ENCODE measurements at regions of chr14 and their contacts with region 1.

Region 1: GRCh38 chr14:54175298-54175942 is 218.8 kb upstream of the BMP4 start:
- DNase-seq: peak; percentile 16
- ATAC-seq: peak; percentile 62; the same call in 2 of the 3 replicates
- H3K4me3 ChIP-seq: no peak overlapping the region
- H3K27ac ChIP-seq: no peak overlapping the region
- H3K4me1 ChIP-seq: no peaks in the 10 kb centered on the region
- H3K27me3 ChIP-seq: peaks cover 0 to 4% of the 10 kb centered on the region in 2 experiments; a peak in 1 of 4 replicates
- CTCF ChIP-seq: peak; percentile 60 to 76 (median 69)
- EP300 ChIP-seq: no peak
- POLR2A ChIP-seq: no peak
- RAD21 ChIP-seq: peak; percentile 87

Region 2: DNA sequence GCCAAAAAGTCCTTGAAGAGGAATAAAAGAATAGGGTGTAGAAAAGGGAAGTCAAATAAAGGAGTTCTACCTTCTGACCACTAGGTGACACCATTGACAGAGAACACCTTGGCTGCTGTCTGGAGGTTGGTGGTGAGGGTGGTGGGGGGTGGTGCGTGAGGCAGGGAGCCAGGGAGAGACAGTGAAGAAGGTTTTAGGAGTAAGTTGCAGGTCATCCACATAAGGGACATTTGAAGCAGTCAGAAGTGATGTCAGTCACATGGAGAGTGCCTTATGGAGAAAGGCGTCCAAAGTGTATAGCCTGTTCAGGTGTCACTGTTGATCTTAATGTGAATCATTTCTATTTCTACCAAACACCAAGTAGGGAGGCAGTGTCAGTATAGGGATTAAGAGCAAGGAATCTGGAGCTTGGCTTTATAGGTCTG is 743.0 kb before region 1 on chr14:
- CTCF ChIA-PET with region 1: interaction called, 10 read pairs
- POLR2A ChIA-PET with region 1: no interaction called
- RAD21 ChIA-PET with region 1: no interaction called
- SMC1A ChIA-PET with region 1: interaction called, 3 read pairs
- in situ Hi-C with region 1: no loop called
- intact Hi-C with region 1: loop called (anchors 1 kb)
- DNase-seq: no peak
- ATAC-seq: peak; percentile 87
- H3K4me3 ChIP-seq: no peak overlapping the region
- H3K27ac ChIP-seq: no peak overlapping the region
- H3K4me1 ChIP-seq: no peaks in the 10 kb centered on the region
- H3K27me3 ChIP-seq: no peaks in the 10 kb centered on the region
- CTCF ChIP-seq: peak; percentile 63 to 70 (median 70)
- EP300 ChIP-seq: no peak
- POLR2A ChIP-seq: no peak
- RAD21 ChIP-seq: peak; percentile 87

Region 3: GRCh38 chr14:53929871-53930715 is 245.3 kb before region 1 on chr14:
- CTCF ChIA-PET with region 1: interaction called, 3 read pairs
- POLR2A ChIA-PET with region 1: no interaction called
- RAD21 ChIA-PET with region 1: interaction called, 3 read pairs
- SMC1A ChIA-PET with region 1: interaction called, 11 read pairs
- in situ Hi-C with region 1: no loop called
- intact Hi-C with region 1: loop called (anchors 2 kb)
- DNase-seq: no peak
- ATAC-seq: peak; percentile 54; the same call in 2 of the 3 replicates
- H3K4me3 ChIP-seq: no peak overlapping the region
- H3K27ac ChIP-seq: no peak overlapping the region
- H3K4me1 ChIP-seq: no peaks in the 10 kb centered on the region
- H3K27me3 ChIP-seq: no peaks in the 10 kb centered on the region; a peak in 1 of 4 replicates
- CTCF ChIP-seq: peak; percentile 60 to 71 (median 68)
- EP300 ChIP-seq: no peak
- POLR2A ChIP-seq: no peak
- RAD21 ChIP-seq: peak; percentile 59

Region 4: DNA sequence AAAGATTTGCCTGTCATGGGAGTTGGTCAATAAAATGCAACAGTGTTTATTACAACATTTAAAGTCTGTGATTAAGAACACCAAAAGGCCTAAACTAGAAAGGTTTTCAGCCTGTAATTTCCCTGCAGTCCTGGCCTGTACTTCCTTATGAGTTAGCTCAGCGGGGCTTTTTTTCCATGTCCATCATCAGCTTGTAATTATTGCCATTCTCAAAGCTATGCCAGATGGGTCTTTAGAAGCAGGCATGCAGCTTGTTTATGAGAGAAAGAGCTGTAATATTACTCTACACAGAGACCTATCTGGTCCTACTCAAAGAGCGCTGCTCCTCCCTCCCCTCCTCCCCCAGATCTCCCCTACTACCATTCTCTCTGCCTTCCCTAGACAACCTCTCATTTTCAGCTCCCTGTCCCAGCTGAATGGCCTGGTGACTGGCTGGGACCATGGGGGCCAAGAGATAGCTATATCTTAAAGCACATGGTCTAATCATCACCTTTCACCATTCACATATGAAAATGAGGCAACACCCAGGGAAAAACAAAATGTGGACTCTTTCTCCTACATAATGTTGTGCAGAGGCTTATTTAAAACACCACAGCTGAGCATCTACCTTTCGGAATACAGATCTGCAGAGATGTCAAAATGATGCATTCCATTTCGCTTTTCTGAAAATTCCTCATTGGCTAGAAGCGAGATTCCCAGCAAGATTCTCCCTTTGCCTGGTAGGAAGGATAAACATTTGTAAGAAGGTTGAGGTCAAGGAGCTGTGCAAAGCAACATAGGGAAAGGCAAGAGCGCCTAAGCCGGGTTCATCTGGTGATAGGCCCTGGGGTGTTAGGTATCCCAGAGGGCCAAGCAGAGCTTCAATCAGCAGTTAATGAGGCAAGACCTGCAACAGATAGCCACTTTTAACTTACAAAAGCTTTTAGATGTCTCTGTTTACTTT is 11.7 kb after region 1 on chr14:
- CTCF ChIA-PET with region 1: interaction called, 10 read pairs
- POLR2A ChIA-PET with region 1: no interaction called
- RAD21 ChIA-PET with region 1: no interaction called
- SMC1A ChIA-PET with region 1: interaction called, 4 read pairs
- in situ Hi-C with region 1: no loop called
- intact Hi-C with region 1: no loop called
- DNase-seq: no peak
- ATAC-seq: no peak
- H3K4me3 ChIP-seq: no peak overlapping the region
- H3K27ac ChIP-seq: no peak overlapping the region
- H3K4me1 ChIP-seq: no peaks in the 10 kb centered on the region
- H3K27me3 ChIP-seq: no peaks in the 10 kb centered on the region
- CTCF ChIP-seq: no peak
- EP300 ChIP-seq: no peak
- POLR2A ChIP-seq: no peak
- RAD21 ChIP-seq: no peak

Region 5: GRCh38 chr14:54329082-54329695 is 153.8 kb after region 1 on chr14:
- CTCF ChIA-PET with region 1: interaction called, 27 read pairs
- POLR2A ChIA-PET with region 1: no interaction called
- RAD21 ChIA-PET with region 1: interaction called, 8 read pairs
- SMC1A ChIA-PET with region 1: interaction called, 21 read pairs
- in situ Hi-C with region 1: no loop called
- intact Hi-C with region 1: loop called (anchors 5 kb)
- DNase-seq: no peak
- ATAC-seq: peak; percentile 86
- H3K4me3 ChIP-seq: no peak overlapping the region
- H3K27ac ChIP-seq: no peak overlapping the region
- H3K4me1 ChIP-seq: no peaks in the 10 kb centered on the region
- H3K27me3 ChIP-seq: no peaks in the 10 kb centered on the region; a peak in 1 of 4 replicates
- CTCF ChIP-seq: peak; percentile 75 to 86 (median 79)
- EP300 ChIP-seq: no peak
- POLR2A ChIP-seq: no peak
- RAD21 ChIP-seq: peak; percentile 87

Region 6: GRCh38 chr14:54606178-54606577 is 430.8 kb after region 1 on chr14:
- CTCF ChIA-PET with region 1: no interaction called
- POLR2A ChIA-PET with region 1: no interaction called
- RAD21 ChIA-PET with region 1: no interaction called
- SMC1A ChIA-PET with region 1: no interaction called
- in situ Hi-C with region 1: no loop called
- intact Hi-C with region 1: no loop called
- DNase-seq: no peak
- ATAC-seq: no peak
- H3K4me3 ChIP-seq: no peak overlapping the region
- H3K27ac ChIP-seq: no peak overlapping the region
- H3K4me1 ChIP-seq: no peaks in the 10 kb centered on the region
- H3K27me3 ChIP-seq: no peaks in the 10 kb centered on the region
- CTCF ChIP-seq: no peak
- EP300 ChIP-seq: no peak
- POLR2A ChIP-seq: no peak
- RAD21 ChIP-seq: no peak

Measured in GM12878 (cell line).